Activated CD8-positive, alpha-beta T cell treated with anti-CD3 and anti-CD28 coated beads for 36 hours (primary cell): ENCODE measurements at regions of chr11 and their contacts with region 1.

Region 1: DNA sequence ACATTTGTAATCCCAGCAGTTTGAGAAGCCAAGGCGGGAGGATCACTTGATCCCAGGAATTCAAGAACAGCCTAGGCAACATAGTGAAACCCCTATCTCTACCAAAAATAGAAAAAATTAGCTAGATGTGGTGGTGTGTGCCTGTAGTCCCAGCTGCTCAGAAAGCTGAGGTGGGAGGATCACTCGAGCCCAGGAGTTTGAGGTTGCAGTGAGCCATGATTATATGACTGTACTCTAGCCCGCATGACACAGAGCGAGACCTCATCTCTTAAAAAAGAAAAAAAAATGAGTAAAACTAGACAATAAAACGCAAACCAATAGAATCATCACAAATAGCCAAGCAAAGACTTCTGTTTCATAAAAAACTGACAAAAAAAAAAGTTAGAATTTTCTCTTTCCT is 21.8 kb downstream of the NUCB2 start:
- DNase-seq: peak; percentile 86
- ATAC-seq: peak; percentile 76
- H3K4me3 Mint-ChIP-seq: peak overlapping the region; percentile 12
- H3K27ac Mint-ChIP-seq: peak overlapping the region; percentile 61
- H3K4me1 Mint-ChIP-seq: peaks cover 45% of the 10 kb centered on the region
- H3K27me3 Mint-ChIP-seq: no peaks in the 10 kb centered on the region
- CTCF ChIP-seq: no peak

Region 2: DNA sequence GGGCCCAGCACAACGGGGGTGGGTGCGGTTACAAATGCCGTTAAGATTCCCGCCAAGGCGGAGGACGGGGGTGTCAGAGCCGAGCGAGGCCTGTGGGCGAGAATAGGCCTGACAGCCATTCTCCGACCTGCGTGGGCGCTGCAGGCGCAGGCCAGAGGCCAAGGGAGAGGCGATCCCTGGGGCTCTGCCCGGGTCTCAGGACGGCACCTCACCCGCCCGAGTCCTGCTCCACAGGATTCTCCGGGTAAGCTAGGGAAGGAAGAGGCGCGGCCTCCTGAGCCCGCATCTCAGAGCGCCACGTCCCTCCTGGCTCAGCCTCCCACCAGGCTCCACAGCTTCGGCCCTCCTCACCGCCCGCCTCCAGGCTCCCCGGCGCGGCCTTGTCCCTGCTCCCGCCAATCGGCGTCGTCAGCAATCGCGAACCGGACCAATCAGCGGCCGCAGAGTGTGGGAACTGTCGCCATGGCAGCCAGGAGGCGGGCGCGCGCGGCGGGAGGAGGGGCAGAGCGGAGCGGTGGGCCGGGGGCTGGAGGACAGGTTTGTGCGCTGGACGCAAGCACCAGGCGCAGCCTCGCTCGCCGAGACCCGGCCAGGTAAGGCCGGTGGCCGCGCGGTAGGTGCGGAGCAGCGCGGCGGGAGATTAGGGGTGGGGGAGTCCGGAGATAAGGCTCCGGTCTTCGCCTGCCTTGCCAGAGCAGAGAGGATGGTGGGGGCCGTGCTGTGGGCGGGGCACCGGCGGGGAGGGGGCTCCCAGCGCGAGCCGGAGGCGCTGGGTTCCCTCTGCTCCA is 21.9 kb before region 1 on chr11 and contains the start of gene NUCB2:
- CTCF ChIA-PET with region 1: interaction called, 3 read pairs
- POLR2A ChIA-PET with region 1: interaction called, 9 read pairs
- intact Hi-C with region 1: loop called (anchors 2 kb)
- DNase-seq: peak; percentile 97
- ATAC-seq: peak; percentile 88
- H3K4me3 Mint-ChIP-seq: peak within 1 kb of the TSS; percentile 82
- H3K27ac Mint-ChIP-seq: peak within 1 kb of the TSS; percentile 91
- H3K4me1 Mint-ChIP-seq: peaks cover 36% of the 10 kb centered on the region
- H3K27me3 Mint-ChIP-seq: no peaks in the 10 kb centered on the region
- CTCF ChIP-seq: no peak
- total RNA-seq, gene NUCB2: 81.9 to 86.0 TPM

Region 3: GRCh38 chr11:17286332-17286731 is 12.0 kb before region 1 on chr11:
- CTCF ChIA-PET with region 1: interaction called, 3 read pairs
- POLR2A ChIA-PET with region 1: interaction called, 12 read pairs
- intact Hi-C with region 1: loop called (anchors 2 kb)
- DNase-seq: no peak
- ATAC-seq: peak; percentile 41
- H3K4me3 Mint-ChIP-seq: no peak overlapping the region
- H3K27ac Mint-ChIP-seq: peak overlapping the region; percentile 78
- H3K4me1 Mint-ChIP-seq: peaks cover 48% of the 10 kb centered on the region
- H3K27me3 Mint-ChIP-seq: no peaks in the 10 kb centered on the region
- CTCF ChIP-seq: no peak